GM12878 (cell line): ENCODE measurements at regions of chr21 and their contacts with region 1.

Region 1: DNA sequence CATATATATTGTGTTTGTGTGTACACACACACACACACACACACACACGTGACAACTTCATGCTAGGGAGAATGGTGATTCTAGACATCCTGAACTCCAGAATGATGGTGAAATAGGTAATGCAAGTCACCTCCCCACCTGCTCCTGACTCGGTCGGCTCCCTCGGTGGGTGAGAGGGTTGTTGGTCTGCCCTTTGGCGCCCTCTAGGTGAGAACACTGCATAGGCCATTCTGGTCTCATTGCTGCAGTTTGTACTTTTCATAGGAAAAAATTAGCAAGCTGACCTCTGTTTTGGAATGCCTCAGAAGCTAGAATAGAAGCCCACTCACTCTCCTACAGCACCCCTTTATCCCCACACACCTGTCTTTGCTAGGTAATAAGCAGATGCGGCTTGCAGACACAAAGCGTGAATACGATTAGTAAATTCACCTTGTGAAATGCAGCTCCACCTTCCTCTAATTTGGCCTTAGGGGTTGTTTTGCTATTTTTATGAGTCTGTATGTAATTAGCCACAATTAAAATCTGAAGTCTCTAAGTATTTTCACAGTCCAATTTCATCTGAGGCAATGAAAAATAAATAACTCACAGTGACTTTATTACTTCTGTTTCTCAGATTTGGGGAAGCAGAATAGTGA is 130.0 kb upstream of the KCNJ15 start:
- DNase-seq: no peak
- ATAC-seq: peak; percentile 97
- H3K4me3 ChIP-seq: no peak overlapping the region
- H3K27ac ChIP-seq: no peak overlapping the region
- H3K4me1 ChIP-seq: no peaks in the 10 kb centered on the region
- H3K27me3 ChIP-seq: peaks cover 0 to 2% of the 10 kb centered on the region in 2 experiments; a peak in 2 of 4 replicates
- CTCF ChIP-seq: peak; percentile 61 to 79 (median 71)
- EP300 ChIP-seq: no peak
- POLR2A ChIP-seq: no peak
- RAD21 ChIP-seq: peak; percentile 69

Region 2: DNA sequence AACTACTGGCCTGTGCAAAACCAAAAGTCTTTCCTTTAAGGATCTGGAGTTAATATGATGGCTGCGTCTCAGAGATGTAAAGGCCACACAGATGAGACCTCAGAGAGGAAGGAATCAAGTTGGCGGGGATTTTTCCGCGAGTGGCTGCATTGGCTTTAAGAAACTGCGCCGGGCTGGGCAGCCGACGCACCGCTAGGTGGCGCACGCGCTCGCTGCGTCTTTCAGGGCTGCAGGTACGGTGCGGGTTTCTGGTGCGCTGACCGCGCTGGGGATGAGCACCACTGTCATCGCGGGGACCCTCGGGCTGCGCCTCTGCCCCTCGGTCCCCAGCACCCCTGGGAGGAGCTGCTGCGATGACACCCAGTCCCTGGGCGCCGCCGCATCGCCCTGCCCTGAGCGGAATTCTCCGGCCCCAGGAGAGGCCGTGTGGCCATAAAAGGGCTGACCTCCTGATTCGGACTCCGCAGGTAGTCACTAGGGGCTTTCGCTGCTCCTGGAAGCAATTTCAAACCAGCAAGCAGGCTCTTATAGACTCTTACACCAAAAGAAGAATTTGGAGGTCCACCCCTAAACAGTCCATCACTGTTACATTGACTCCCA is 451.5 kb before region 1 on chr21:
- CTCF ChIA-PET with region 1: interaction called, 5 read pairs
- POLR2A ChIA-PET with region 1: no interaction called
- RAD21 ChIA-PET with region 1: interaction called, 8 read pairs
- SMC1A ChIA-PET with region 1: interaction called, 3 read pairs
- in situ Hi-C with region 1: no loop called
- intact Hi-C with region 1: loop called (anchors 10 kb)
- DNase-seq: no peak
- ATAC-seq: peak; percentile 95
- H3K4me3 ChIP-seq: no peak overlapping the region
- H3K27ac ChIP-seq: no peak overlapping the region
- H3K4me1 ChIP-seq: no peaks in the 10 kb centered on the region; the same call in 1 of the 2 replicates
- H3K27me3 ChIP-seq: no peaks in the 10 kb centered on the region
- CTCF ChIP-seq: peak; percentile 82 to 90 (median 83)
- EP300 ChIP-seq: no peak
- POLR2A ChIP-seq: no peak
- RAD21 ChIP-seq: peak; percentile 42; the same call in 1 of the 2 replicates

Region 3: DNA sequence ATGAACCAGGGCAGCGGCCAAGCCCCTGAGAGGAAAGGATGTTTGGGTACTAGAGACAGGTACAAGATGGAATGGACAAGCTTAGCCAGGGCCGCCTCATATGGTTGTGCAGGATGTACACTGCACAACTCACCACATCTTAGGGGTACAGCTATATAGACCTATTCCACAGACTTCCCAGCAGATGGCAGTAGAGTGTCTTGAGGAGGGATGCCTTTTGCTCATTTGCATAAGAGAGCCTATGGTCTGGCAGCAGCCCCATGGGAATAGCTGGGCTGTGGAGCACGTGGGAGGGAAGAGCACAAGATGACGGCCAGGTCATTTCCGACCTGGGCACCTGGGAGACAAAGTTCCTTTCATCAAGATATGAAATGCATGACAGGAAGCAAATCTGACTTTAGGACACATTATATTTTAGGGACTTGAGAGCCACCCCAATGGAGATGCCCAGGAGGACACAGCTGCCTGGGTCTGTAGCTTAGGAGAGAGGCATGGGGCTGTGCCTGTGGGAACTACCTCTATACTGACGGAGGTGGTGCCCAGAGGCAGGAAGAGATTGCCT is 426.1 kb before region 1 on chr21:
- CTCF ChIA-PET with region 1: interaction called, 17 read pairs
- POLR2A ChIA-PET with region 1: no interaction called
- RAD21 ChIA-PET with region 1: interaction called, 8 read pairs
- SMC1A ChIA-PET with region 1: interaction called, 6 read pairs
- in situ Hi-C with region 1: no loop called
- intact Hi-C with region 1: loop called (anchors 1 kb)
- DNase-seq: peak; percentile 56
- ATAC-seq: peak; percentile 99
- H3K4me3 ChIP-seq: no peak overlapping the region
- H3K27ac ChIP-seq: no peak overlapping the region
- H3K4me1 ChIP-seq: no peaks in the 10 kb centered on the region; the same call in 1 of the 2 replicates
- H3K27me3 ChIP-seq: peaks cover 0 to 1% of the 10 kb centered on the region in 2 experiments; a peak in 1 of 4 replicates
- CTCF ChIP-seq: peak; percentile 59 to 66 (median 66)
- EP300 ChIP-seq: no peak
- POLR2A ChIP-seq: no peak
- RAD21 ChIP-seq: peak; percentile 62

Region 4: GRCh38 chr21:37711836-37712568 is 414.8 kb before region 1 on chr21:
- CTCF ChIA-PET with region 1: interaction called, 46 read pairs
- POLR2A ChIA-PET with region 1: no interaction called
- RAD21 ChIA-PET with region 1: interaction called, 25 read pairs
- SMC1A ChIA-PET with region 1: interaction called, 22 read pairs
- in situ Hi-C with region 1: loop called (anchors 10 kb)
- intact Hi-C with region 1: loop called (anchors 1 kb)
- DNase-seq: no peak
- ATAC-seq: peak; percentile 97
- H3K4me3 ChIP-seq: no peak overlapping the region
- H3K27ac ChIP-seq: no peak overlapping the region
- H3K4me1 ChIP-seq: no peaks in the 10 kb centered on the region
- H3K27me3 ChIP-seq: no peaks in the 10 kb centered on the region
- CTCF ChIP-seq: peak; percentile 85 to 95 (median 89)
- EP300 ChIP-seq: no peak
- POLR2A ChIP-seq: no peak
- RAD21 ChIP-seq: peak; percentile 74

Region 5: DNA sequence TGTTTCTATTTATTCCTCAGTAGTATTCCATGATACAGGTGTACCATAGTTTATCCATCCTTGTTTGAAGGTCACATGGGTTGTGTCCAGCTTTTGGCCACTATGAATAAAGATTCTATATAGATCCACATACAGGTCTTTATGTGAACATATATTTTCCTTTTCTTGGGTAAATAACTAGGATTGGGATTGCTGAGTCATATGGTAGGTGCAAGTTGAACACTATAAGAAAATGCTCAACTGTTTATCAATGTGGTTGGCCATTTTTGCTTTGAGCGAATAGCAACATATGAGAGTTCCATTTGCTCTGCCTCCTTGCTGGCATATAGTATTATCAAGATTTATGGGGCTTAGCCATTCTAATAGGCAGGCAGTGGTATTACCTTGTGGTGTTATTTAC is 40.2 kb before region 1 on chr21:
- CTCF ChIA-PET with region 1: no interaction called
- POLR2A ChIA-PET with region 1: no interaction called
- RAD21 ChIA-PET with region 1: no interaction called
- SMC1A ChIA-PET with region 1: no interaction called
- in situ Hi-C with region 1: no loop called
- intact Hi-C with region 1: no loop called
- DNase-seq: no peak
- ATAC-seq: no peak
- H3K4me3 ChIP-seq: no peak overlapping the region
- H3K27ac ChIP-seq: no peak overlapping the region
- H3K4me1 ChIP-seq: no peaks in the 10 kb centered on the region
- H3K27me3 ChIP-seq: no peaks in the 10 kb centered on the region
- CTCF ChIP-seq: no peak
- EP300 ChIP-seq: no peak
- POLR2A ChIP-seq: no peak
- RAD21 ChIP-seq: no peak

Region 6: DNA sequence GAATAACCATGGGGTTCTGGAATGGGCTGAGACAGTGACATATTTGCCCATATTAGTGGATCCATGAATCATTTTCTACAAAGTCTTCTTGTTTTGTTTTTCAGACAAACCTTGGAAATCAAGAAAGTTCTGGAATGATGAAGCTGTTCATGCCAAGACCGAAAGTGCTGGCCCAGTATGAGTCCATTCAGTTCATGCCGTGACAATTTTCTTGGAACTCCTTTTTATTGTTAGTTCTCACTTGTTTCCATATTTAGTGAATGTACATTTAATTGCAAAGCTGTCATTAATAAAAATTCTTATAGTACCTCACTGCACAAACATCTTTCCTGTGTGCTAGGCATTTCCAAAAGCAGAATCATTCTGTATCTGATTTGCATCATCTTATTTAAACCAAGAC is 29.4 kb after region 1 on chr21:
- CTCF ChIA-PET with region 1: no interaction called
- POLR2A ChIA-PET with region 1: no interaction called
- RAD21 ChIA-PET with region 1: no interaction called
- SMC1A ChIA-PET with region 1: no interaction called
- in situ Hi-C with region 1: no loop called
- intact Hi-C with region 1: no loop called
- DNase-seq: no peak
- ATAC-seq: no peak
- H3K4me3 ChIP-seq: no peak overlapping the region
- H3K27ac ChIP-seq: no peak overlapping the region
- H3K4me1 ChIP-seq: no peaks in the 10 kb centered on the region
- H3K27me3 ChIP-seq: no peaks in the 10 kb centered on the region; a peak in 1 of 4 replicates
- CTCF ChIP-seq: no peak
- EP300 ChIP-seq: no peak
- POLR2A ChIP-seq: no peak
- RAD21 ChIP-seq: no peak